ENCODE measurements at regions of chr15 and their contacts with region 1.

Region 1: GRCh38 chr15:68304589-68305337 is 27.2 kb downstream of the FEM1B start:
- DNase-seq: no peak
- ATAC-seq: no peak
- H3K4me3 Mint-ChIP-seq: no peak overlapping the region
- H3K27ac Mint-ChIP-seq: no peak overlapping the region
- H3K4me1 Mint-ChIP-seq: peaks cover 20% of the 10 kb centered on the region
- H3K27me3 Mint-ChIP-seq: peaks cover 5% of the 10 kb centered on the region

Region 2: GRCh38 chr15:68183616-68184315 is 121.0 kb before region 1 on chr15:
- CTCF ChIA-PET with region 1: no interaction called
- POLR2A ChIA-PET with region 1: no interaction called
- DNase-seq: no peak
- ATAC-seq: no peak
- H3K4me3 Mint-ChIP-seq: no peak overlapping the region
- H3K27ac Mint-ChIP-seq: no peak overlapping the region
- H3K4me1 Mint-ChIP-seq: peaks cover 1% of the 10 kb centered on the region
- H3K27me3 Mint-ChIP-seq: no peaks in the 10 kb centered on the region

Region 3: GRCh38 chr15:68229386-68230156 is 75.2 kb before region 1 on chr15 and contains the start of gene CLN6:
- CTCF ChIA-PET with region 1: interaction called, 15 read pairs
- POLR2A ChIA-PET with region 1: no interaction called
- DNase-seq: peak; percentile 89
- ATAC-seq: peak; percentile 92
- H3K4me3 Mint-ChIP-seq: peak within 1 kb of the TSS; percentile 90
- H3K27ac Mint-ChIP-seq: peak within 1 kb of the TSS; percentile 93
- H3K4me1 Mint-ChIP-seq: peaks cover 48% of the 10 kb centered on the region
- H3K27me3 Mint-ChIP-seq: no peaks in the 10 kb centered on the region
- total RNA-seq, gene CLN6: 64.5 to 69.7 TPM

Region 4: GRCh38 chr15:68277603-68278344 is 27.0 kb before region 1 on chr15 and contains the start of gene FEM1B:
- CTCF ChIA-PET with region 1: interaction called, 35 read pairs
- POLR2A ChIA-PET with region 1: interaction called, 28 read pairs
- DNase-seq: peak; percentile 90
- ATAC-seq: peak; percentile 82
- H3K4me3 Mint-ChIP-seq: peak within 1 kb of the TSS; percentile 88
- H3K27ac Mint-ChIP-seq: peak within 1 kb of the TSS; percentile 98
- H3K4me1 Mint-ChIP-seq: peaks cover 39% of the 10 kb centered on the region
- H3K27me3 Mint-ChIP-seq: no peaks in the 10 kb centered on the region
- total RNA-seq, gene FEM1B: 45.1 to 50.7 TPM

Region 5: DNA sequence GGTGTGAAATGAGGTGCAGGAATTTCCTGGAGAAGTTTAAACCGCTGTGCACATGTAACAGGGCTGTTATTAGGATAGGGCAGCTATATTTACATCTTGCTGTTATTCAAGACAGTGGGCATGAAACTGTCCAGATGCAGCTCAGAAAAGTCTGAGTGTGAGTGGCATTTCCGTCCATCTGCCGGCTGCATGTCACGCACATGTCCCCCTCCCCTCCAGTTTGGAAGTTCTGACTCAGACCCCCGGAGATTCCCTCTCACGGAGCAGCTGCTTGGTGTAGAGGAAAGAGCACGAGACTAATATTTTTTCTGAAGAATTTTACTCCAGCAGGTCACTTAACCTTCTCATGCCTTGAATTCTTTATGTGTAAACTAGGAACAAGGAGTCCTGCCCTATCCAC is 42.6 kb after region 1 on chr15:
- CTCF ChIA-PET with region 1: interaction called, 12 read pairs
- POLR2A ChIA-PET with region 1: no interaction called
- DNase-seq: no peak
- ATAC-seq: no peak
- H3K4me3 Mint-ChIP-seq: no peak overlapping the region
- H3K27ac Mint-ChIP-seq: no peak overlapping the region
- H3K4me1 Mint-ChIP-seq: peaks cover 6% of the 10 kb centered on the region
- H3K27me3 Mint-ChIP-seq: peaks cover 5% of the 10 kb centered on the region

Region 6: DNA sequence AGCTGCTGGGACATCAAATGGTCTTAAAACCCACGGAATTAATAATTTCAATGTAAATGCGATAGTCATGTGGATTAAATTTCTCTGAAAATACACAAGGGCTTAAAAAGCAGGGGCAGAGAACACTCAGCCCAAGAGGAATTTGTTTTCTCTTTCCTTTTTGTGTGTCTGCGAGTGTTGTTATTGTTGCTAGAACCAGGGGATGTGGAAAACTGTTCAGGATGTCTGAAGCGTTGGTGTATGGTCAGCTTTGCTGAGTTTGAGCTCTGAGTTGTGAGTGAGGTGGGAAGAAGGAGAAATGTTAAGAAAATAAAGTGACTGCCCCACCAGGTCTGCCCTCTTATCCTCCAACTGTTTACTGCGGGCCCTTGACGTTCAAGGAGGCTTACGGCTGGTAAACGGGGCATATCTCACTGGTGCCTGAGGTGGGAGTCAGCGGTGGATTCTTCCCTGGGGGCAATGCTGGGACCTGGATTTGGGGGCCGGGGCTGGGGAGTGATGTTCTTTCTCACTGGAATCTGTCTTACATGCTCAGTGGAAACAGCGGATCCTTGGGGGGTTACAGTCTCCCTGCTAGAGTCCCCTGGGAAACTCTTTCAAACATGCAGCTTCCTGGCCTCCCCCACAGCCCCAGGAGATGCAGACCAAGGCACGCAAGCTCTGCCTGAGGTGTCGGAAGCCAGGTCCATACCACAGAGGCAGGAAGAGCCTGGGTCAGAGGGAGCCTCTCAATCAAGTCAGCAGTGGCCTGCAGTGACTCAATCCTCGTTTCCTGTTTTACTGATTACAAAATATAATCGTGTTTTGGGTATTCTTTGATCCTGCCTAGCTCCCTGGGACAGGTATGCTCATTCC is 85.4 kb after region 1 on chr15:
- CTCF ChIA-PET with region 1: interaction called, 143 read pairs
- POLR2A ChIA-PET with region 1: no interaction called
- DNase-seq: peak; percentile 64
- ATAC-seq: peak; percentile 92
- H3K4me3 Mint-ChIP-seq: peak overlapping the region; percentile 20
- H3K27ac Mint-ChIP-seq: peak overlapping the region; percentile 62
- H3K4me1 Mint-ChIP-seq: peaks cover 25% of the 10 kb centered on the region
- H3K27me3 Mint-ChIP-seq: peaks cover 28% of the 10 kb centered on the region

Region 7: DNA sequence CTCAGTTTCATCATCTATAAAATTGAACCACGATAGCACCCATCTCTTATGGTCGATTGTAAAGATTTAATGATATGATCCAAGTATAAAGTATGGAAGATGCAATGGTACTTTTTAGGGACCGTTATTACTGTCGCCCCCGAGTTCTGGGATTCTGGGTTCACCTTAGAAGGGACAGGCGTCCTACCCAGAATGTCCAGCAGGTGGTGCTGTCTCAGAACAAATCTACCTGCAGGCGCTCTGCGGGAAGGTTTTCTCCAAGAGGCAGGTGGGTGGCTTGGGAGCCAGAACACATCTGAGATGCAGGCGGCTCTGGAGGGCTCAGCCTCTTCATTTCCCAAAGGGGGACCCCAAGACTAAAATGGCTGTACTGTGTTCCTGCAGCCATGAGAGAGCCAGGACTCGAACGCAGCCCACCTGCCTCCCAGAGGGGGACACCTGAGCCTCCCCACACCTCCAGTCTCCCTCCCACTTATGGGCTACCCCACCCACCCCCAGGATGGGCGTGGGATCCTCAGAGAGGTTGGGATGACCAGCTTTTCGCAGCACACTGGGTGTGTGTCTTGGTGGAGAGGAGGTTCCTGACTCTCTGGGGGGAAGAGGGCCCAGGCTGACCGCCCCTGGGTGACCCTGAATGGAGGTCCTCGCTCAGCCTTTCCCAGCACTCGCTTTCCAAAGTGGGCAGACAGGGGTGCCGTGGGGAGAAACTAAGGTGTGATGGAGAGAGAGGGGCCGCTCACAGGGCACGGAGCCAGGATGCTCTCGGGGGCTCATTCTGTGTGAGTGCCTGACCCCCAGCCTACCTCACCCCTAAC is 245.9 kb after region 1 on chr15:
- CTCF ChIA-PET with region 1: interaction called, 46 read pairs
- POLR2A ChIA-PET with region 1: no interaction called
- DNase-seq: peak; percentile 84
- ATAC-seq: peak; percentile 51
- H3K4me3 Mint-ChIP-seq: no peak overlapping the region
- H3K27ac Mint-ChIP-seq: no peak overlapping the region
- H3K4me1 Mint-ChIP-seq: no peaks in the 10 kb centered on the region
- H3K27me3 Mint-ChIP-seq: peaks cover 20% of the 10 kb centered on the region